ENCODE measurements at regions of chr7 and their contacts with region 1.

Region 1: DNA sequence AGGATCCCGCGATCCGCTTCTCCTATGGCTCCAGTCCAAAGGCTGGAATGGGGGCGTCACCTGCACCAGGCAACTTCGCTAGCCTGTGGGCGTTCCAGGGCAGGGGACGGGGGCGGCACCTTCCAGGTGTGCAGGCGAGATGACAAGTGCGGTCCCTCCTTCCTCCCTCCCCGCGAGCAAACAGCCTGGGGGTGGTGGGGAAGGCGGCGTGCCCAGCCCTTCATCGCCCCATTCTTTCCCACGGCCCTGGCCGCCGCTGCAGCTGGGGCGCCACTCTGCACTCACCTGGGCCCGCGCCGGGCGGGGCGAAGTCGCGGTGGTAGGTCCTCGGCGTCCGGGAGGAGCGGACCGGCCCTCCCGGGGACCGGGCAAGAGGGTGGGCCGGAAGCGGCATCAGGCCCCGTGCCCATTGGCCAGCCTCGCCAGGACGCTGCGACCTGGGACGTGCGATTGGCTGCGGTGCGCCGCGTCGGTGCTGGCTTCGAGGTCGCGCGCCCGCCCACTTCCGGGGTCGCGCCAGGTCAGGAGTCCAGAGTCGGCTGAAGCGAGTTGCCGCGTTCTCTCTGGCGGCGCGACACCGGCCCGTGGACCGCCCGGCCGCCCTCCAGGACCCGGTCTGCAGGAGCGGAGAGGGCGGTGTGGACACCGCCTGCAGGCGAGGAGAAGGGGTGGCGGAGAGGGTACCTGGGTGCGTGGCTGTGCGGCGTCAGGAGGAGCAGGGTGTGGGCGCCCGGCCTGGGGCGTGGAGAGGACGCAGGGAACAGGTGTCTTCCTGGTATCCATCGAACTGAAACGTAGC is at the start of gene TECPR1:
- DNase-seq: peak; percentile 85
- ATAC-seq: peak; percentile 96
- H3K4me3 Mint-ChIP-seq: peak within 1 kb of the TSS; percentile 94
- H3K27ac Mint-ChIP-seq: peak within 1 kb of the TSS; percentile 80
- H3K4me1 Mint-ChIP-seq: peaks cover 39% of the 10 kb centered on the region
- H3K27me3 Mint-ChIP-seq: no peaks in the 10 kb centered on the region
- CTCF ChIP-seq: no peak
- total RNA-seq, gene TECPR1: 24.6 and 34.5 TPM in 2 replicates

Region 2: GRCh38 chr7:96321658-96322372 is 1930.2 kb before region 1 on chr7 and contains the start of gene SLC25A13:
- CTCF ChIA-PET with region 1: no interaction called
- POLR2A ChIA-PET with region 1: no interaction called
- intact Hi-C with region 1: loop called (anchors 5 kb)
- DNase-seq: peak; percentile 69
- ATAC-seq: peak; percentile 71
- H3K4me3 Mint-ChIP-seq: peak within 1 kb of the TSS; percentile 90
- H3K27ac Mint-ChIP-seq: peak within 1 kb of the TSS; percentile 88
- H3K4me1 Mint-ChIP-seq: peaks cover 41% of the 10 kb centered on the region
- H3K27me3 Mint-ChIP-seq: no peaks in the 10 kb centered on the region
- CTCF ChIP-seq: no peak
- total RNA-seq, gene SLC25A13: 28.5 and 29.1 TPM in 2 replicates

Region 3: DNA sequence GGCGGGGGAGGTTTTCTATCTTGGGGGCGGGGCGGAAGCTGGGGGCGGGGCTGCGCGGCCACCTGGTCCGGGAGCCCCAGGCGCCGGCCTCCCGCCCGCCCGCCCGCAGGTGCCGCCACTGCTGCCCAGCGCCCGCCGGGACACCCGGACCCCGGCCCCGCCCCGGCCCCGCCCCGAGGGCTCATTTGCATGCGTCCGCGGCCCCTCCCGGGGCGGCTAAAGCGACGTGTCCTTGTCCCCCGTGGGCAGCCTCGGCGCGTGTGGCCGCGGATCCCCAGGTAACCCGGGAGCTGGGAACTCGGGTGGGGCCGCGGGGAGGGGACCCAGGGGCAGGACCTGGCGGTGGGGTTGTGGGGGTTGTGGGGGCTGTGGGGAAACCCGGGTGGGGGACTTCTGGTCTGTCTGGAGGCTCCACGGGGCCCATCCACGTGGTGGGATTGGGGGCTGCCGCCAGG is 40.8 kb before region 1 on chr7 and contains the start of gene BHLHA15:
- CTCF ChIA-PET with region 1: no interaction called
- POLR2A ChIA-PET with region 1: interaction called, 10 read pairs
- intact Hi-C with region 1: loop called (anchors 5 kb)
- DNase-seq: no peak
- ATAC-seq: peak; percentile 54
- H3K4me3 Mint-ChIP-seq: peak within 1 kb of the TSS; percentile 46
- H3K27ac Mint-ChIP-seq: no peak within 1 kb of the TSS
- H3K4me1 Mint-ChIP-seq: peaks cover 6% of the 10 kb centered on the region
- H3K27me3 Mint-ChIP-seq: peaks cover 4% of the 10 kb centered on the region
- CTCF ChIP-seq: no peak
- total RNA-seq, gene BHLHA15: 0.35 TPM in 1 of 2 replicates, not detected in the other

Region 4: GRCh38 chr7:98224841-98225210 is 27.2 kb before region 1 on chr7:
- CTCF ChIA-PET with region 1: no interaction called
- POLR2A ChIA-PET with region 1: interaction called, 10 read pairs
- intact Hi-C with region 1: no loop called
- DNase-seq: no peak
- ATAC-seq: no peak
- H3K4me3 Mint-ChIP-seq: no peak overlapping the region
- H3K27ac Mint-ChIP-seq: no peak overlapping the region
- H3K4me1 Mint-ChIP-seq: peaks cover 5% of the 10 kb centered on the region
- H3K27me3 Mint-ChIP-seq: no peaks in the 10 kb centered on the region
- CTCF ChIP-seq: no peak

Region 5: DNA sequence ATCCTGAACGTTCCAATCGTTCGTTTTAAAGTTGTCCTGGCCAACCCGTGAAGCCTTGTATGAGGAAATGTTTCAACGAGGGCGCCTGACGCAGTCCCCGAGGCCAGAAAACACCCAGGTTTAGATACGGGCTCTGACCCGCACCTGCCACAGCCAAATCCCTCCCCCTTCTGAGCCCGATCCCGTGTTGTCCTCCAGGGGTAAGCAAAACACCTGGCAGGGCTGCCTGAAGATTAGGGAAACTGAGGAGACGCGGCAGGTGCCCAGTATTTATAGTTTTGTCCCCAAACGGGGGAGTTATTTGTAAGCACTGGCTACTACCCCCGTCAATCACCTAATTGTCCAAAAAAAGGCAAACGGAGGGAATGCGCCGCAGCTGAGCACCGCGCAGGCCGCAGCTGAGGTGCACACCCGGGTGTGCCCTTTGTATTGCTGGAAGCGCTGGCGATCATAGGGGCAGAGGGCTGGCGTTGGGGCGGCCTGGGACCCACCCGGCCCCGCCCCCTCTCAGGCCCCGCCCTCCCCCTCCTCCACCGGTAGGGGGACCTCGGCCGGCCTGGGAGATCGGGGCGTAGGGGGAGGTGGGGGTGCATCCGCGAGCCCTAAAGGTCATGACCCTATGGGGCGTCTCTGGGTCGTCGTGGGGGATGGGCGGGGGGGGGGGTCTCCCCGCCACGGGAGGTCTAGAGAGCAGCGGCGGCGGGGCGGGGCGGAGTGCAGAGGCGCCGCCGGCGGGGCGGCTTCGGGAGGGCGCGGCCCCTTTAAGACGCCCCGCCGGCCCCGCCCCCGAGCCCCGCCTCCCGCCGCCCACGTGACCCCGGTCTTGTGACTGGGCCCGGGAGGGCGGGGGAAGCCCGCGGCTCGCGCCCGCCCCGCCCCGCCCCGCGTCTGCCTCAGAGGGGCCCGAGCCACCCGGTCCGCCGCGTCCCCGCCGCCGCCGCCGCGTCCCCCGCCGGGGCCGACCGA is 29.0 kb after region 1 on chr7 and contains the start of gene BRI3:
- CTCF ChIA-PET with region 1: no interaction called
- POLR2A ChIA-PET with region 1: interaction called, 3 read pairs
- intact Hi-C with region 1: loop called (anchors 1 kb)
- DNase-seq: peak; percentile 86
- ATAC-seq: peak; percentile 82
- H3K4me3 Mint-ChIP-seq: peak within 1 kb of the TSS; percentile 86
- H3K27ac Mint-ChIP-seq: peak within 1 kb of the TSS; percentile 75
- H3K4me1 Mint-ChIP-seq: peaks cover 36% of the 10 kb centered on the region
- H3K27me3 Mint-ChIP-seq: no peaks in the 10 kb centered on the region
- CTCF ChIP-seq: no peak
- total RNA-seq, gene BRI3: 53.7 and 55.9 TPM in 2 replicates

Region 6: GRCh38 chr7:98400542-98401340 is 148.7 kb after region 1 on chr7 and contains the start of gene BAIAP2L1:
- CTCF ChIA-PET with region 1: no interaction called
- POLR2A ChIA-PET with region 1: interaction called, 7 read pairs
- intact Hi-C with region 1: loop called (anchors 1 kb)
- DNase-seq: peak; percentile 87
- ATAC-seq: peak; percentile 92
- H3K4me3 Mint-ChIP-seq: peak within 1 kb of the TSS; percentile 76
- H3K27ac Mint-ChIP-seq: peak within 1 kb of the TSS; percentile 35
- H3K4me1 Mint-ChIP-seq: peaks cover 27% of the 10 kb centered on the region
- H3K27me3 Mint-ChIP-seq: peaks cover 26% of the 10 kb centered on the region
- CTCF ChIP-seq: no peak
- total RNA-seq, gene BAIAP2L1: 8.1 and 10.4 TPM in 2 replicates

Region 7: DNA sequence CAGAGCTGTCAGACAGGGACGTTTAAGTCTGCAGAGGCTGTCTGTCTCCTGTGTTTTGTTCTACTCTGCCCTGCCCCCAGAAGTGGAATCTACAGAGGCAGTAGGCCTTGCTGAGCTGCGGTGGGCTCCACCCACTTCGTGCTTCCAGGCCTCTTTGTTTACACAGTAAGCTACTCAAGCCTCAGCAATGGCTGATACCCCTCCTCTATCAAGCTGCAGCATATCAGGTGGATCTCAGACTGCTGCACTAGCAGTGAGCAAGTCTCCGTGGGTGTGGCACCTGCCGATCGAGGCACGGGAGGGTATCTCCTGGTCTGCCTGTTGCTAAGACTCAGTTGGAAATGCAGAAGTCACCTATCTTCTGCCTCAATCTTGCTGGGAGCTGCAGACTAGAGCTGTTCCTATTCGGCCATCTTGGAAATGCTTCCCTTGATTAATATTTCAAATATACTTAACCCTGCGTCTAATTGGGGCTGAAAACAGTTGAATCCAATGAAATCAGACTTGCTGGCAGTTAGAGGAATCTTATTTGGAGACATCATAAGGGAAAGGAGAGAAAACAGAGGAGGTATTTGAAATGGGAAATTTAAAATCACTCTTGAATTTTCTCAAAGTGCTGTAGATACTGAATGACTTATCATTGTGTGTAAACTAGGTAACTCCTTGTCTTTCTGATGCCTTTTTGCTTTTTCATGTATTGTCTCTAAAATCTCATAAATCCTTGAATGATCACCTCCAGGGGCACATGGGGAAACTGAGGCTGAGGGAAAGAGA is 1441.6 kb after region 1 on chr7:
- CTCF ChIA-PET with region 1: no interaction called
- POLR2A ChIA-PET with region 1: no interaction called
- intact Hi-C with region 1: no loop called
- DNase-seq: no peak
- ATAC-seq: no peak
- H3K4me3 Mint-ChIP-seq: no peak overlapping the region
- H3K27ac Mint-ChIP-seq: no peak overlapping the region
- H3K4me1 Mint-ChIP-seq: no peaks in the 10 kb centered on the region
- H3K27me3 Mint-ChIP-seq: peaks cover 6% of the 10 kb centered on the region
- CTCF ChIP-seq: no peak